ENCODE measurements at regions of chr10 and their contacts with region 1.

Region 1: DNA sequence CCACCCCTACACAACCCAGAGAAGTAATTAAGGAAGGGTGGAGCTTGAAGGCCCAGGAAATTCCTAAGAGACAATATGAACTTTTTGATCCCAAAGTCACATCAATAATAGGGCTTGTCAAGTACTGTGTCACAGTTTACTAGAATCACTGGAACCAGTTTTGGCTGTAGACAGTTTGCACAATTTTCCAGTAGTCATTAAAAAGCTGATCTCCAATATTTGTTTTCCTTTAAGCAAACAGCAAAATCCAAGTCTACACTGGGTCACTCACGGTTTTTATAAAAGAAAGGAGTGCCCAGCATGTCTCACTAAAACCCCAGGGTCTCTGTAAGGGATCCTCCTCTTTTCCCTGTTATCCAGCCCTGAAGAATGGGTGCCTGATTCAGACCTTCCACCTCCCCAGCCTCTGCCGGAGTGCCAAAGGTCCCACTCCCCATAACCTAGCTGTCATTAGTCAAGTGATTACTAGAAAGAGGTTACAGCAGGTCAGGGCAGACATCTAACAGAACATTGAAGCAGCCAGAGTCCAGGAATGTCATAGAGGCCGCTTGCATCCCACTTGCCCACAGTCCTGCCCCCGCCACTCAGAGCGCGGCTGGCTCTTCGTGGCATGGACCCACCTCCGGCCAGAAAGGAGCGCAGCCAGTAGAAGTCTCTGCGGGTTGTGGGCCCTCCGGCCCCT is 556 bp downstream of the SLC25A16 start:
- DNase-seq: no peak
- H3K4me3 Mint-ChIP-seq: peak overlapping the region; percentile 92
- H3K27ac Mint-ChIP-seq: peak overlapping the region; percentile 88
- H3K4me1 Mint-ChIP-seq: peaks cover 8% of the 10 kb centered on the region
- H3K27me3 Mint-ChIP-seq: no peaks in the 10 kb centered on the region

Region 2: GRCh38 chr10:68406815-68407548 is 119.8 kb before region 1 on chr10 and contains the start of gene RUFY2:
- intact Hi-C with region 1: loop called (anchors 1 kb)
- DNase-seq: peak; percentile 75
- H3K4me3 Mint-ChIP-seq: peak within 1 kb of the TSS; percentile 87
- H3K27ac Mint-ChIP-seq: peak within 1 kb of the TSS; percentile 80
- H3K4me1 Mint-ChIP-seq: peaks cover 14% of the 10 kb centered on the region
- H3K27me3 Mint-ChIP-seq: no peaks in the 10 kb centered on the region
- total RNA-seq, gene RUFY2: 11.3 and 12.1 TPM in 2 replicates

Region 3: DNA sequence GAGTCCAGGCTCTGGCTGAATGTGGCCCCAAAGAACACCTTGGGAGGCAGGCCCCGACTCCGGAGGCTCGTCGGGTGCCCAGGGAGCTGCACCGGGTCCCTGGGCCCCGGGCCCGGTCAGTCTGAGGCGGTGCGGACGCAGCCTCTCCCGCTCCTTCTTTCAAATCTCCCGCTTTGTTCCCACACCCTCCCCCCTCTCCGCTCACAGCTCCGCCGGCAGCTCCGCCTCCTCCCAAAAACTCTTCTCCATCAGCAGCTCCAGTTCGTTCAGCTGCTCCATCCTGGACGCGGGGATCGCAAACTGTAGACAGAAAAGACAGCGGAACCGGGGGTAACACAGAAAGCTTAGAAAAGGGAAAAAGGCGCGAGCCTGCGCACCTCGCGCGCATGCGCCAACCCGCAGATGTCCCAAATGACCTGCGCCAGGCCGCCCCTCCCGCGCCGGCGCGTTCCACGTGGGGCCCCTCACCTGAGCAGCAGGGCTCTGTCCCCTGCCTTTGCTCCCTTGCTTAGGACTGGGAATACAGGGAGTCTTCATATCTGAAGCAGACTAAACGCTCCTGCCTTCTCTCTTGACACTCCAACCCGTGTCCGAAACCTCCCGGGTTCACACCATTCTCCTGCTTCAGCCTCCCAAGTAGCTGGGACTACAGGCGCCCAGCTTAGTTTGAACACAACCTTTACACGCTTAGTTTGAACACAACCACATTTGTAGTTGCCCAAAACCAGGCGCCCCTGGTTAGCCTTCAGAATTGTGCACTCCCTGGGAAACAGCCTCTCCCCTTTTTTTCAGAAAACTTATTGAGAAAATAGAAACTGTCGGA is 55.0 kb before region 1 on chr10 and contains the start of gene DNA2:
- intact Hi-C with region 1: loop called (anchors 1 kb)
- DNase-seq: peak; percentile 79
- H3K4me3 Mint-ChIP-seq: peak within 1 kb of the TSS; percentile 97
- H3K27ac Mint-ChIP-seq: peak within 1 kb of the TSS; percentile 95
- H3K4me1 Mint-ChIP-seq: peaks cover 26% of the 10 kb centered on the region
- H3K27me3 Mint-ChIP-seq: no peaks in the 10 kb centered on the region
- total RNA-seq, gene DNA2: 51.6 and 54.3 TPM in 2 replicates